HEK293T (cell line): ENCODE measurements at regions of chr9 and their contacts with region 1.

Region 1: GRCh38 chr9:37913480-37914153 is 9.7 kb upstream of the SLC25A51 start:
- DNase-seq: peak; percentile 82

Region 2: GRCh38 chr9:37876376-37876775 is 37.2 kb before region 1 on chr9:
- CTCF ChIA-PET with region 1: no interaction called
- POLR2A ChIA-PET with region 1: no interaction called
- DNase-seq: no peak

Region 3: DNA sequence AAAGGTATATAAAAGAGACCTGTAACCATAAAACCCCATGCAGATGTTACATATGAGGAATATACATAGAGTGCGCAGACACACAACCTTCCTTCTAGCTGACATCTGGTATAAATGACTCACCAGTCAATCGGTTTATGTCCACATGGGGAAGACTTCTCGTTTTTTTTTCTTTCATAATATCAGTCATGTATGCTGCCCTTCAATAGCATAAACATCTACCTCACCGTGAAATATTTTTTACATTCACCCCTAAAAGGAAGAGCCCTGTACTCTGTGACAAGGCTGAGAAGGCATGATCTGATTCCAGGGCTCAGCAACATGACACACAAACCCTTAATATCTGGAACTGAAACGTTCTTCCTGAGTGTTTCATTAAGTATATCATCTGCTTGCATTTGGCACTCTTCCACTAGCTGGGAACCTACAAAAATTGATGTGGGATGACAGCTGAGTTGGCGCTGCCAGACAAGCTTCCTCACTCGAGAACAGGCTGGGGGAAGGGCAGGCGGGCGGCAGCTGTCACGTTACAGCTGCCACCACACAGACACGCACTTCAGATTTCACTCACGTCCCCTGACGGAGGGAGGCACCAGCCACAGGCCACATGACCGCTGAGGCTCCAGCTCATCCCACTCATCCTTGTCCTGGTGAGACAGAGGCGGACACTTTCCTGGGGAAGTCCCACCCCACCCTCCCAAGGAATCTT is 81.2 kb after region 1 on chr9:
- CTCF ChIA-PET with region 1: no interaction called
- POLR2A ChIA-PET with region 1: no interaction called
- DNase-seq: no peak

Region 4: DNA sequence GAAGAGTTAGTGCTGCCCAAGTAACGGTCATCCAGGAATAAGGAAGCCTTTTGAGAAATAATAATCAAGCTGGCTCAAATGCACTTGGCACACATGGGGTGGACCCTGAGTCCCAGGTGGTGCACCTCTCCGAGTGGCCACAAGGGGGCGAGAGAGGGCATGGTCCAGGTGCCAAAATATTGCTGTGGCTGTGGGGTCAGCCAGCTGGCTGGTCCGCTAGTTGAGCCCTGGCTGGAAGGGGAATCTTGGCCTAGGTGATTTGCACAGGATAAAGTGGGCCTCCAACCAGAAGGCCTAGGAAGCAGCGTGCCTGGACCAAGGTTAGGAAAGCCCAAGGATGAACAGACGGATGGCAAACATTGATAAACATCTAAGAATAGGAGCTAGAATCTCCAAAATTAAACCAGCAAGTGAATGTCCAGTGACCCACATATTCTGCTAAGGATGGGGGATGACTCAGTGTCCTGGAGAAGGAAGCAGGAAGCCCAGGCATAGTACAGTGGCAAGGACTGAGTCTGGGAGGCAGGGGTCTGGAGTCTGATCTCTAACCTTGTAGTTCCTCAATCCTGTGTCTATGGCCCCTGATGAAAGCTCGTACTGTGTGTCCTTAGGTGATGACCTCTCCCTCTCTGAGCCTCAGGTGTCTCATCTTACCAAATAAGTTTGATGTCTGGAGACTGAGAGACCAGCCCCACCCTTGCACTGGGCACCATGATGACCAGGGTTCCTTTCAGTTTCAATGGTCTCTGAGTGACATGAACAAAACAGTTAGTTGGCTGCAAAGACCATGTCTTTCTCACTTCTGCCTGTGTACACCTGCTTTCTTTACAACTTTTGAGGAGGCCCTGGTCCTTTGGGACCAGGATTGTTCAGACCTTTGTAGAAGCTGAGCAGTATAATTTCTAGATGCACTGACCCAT is 174.6 kb after region 1 on chr9:
- CTCF ChIA-PET with region 1: interaction called, 14 read pairs
- POLR2A ChIA-PET with region 1: no interaction called
- DNase-seq: peak; percentile 85